ENCODE measurements at regions of chr17 and their contacts with region 1.

Region 1: DNA sequence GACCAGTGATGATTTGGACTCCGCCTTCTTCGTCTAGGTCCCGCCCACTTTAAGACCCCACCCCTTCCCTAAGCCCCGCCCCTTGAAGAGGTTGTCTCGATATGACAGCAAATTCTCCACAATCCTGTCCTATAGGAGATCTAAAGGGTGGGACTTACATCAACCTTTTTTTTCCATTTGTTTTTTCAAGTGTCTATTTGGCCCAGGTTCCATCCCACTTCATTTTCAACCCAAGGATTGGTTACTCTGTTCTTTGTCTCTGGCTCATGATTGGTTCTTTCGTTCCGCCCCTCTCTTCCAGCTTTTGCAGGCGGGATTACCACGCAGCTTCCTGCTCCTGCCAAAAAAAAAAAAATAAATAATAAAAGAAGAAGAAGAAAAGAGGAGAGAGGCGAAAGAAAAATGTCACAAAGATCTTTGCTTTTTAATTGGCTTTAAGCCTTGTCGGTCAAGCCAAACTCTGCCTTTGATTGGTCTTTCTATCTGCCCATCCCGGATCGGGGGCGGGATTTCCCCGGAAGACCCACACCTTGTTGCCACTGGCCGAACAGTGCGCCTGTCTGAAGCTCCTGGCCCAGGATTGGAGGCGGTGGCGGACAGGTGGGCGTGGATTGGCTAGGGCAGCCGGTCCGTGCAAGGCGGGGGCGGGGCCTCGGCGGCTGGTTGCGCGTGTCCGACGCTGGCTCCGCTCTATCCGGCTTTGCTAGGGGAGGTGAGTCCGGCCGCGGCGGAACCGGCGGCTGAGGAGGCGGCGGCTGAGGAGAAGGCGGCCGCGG is 1.2 kb upstream of the NLK start:
- DNase-seq: peak; percentile 98 to 100
- H3K4me3 ChIP-seq: peak overlapping the region; percentile 60 to 93
- H3K27ac ChIP-seq: peak overlapping the region; percentile 78 to 81
- H3K4me1 ChIP-seq: peaks cover 9 to 14% of the 10 kb centered on the region in 2 donors
- H3K27me3 ChIP-seq: no peaks in the 10 kb centered on the region
- CTCF ChIP-seq: no peak

Region 2: GRCh38 chr17:27892866-27893769 is 148.1 kb before region 1 on chr17 and contains the start of gene LYRM9:
- intact Hi-C with region 1: loop called (anchors 5 kb)
- DNase-seq: peak; percentile 62 to 96
- H3K4me3 ChIP-seq: peak within 1 kb of the TSS; percentile 76 to 98
- H3K27ac ChIP-seq: peak within 1 kb of the TSS; percentile 62 to 88
- H3K4me1 ChIP-seq: peaks cover 0 to 9% of the 10 kb centered on the region in 2 donors
- H3K27me3 ChIP-seq: no peaks in the 10 kb centered on the region
- CTCF ChIP-seq: peak; percentile 72 to 92 (median 82)
- total RNA-seq, gene LYRM9: 22.2 TPM

Region 3: DNA sequence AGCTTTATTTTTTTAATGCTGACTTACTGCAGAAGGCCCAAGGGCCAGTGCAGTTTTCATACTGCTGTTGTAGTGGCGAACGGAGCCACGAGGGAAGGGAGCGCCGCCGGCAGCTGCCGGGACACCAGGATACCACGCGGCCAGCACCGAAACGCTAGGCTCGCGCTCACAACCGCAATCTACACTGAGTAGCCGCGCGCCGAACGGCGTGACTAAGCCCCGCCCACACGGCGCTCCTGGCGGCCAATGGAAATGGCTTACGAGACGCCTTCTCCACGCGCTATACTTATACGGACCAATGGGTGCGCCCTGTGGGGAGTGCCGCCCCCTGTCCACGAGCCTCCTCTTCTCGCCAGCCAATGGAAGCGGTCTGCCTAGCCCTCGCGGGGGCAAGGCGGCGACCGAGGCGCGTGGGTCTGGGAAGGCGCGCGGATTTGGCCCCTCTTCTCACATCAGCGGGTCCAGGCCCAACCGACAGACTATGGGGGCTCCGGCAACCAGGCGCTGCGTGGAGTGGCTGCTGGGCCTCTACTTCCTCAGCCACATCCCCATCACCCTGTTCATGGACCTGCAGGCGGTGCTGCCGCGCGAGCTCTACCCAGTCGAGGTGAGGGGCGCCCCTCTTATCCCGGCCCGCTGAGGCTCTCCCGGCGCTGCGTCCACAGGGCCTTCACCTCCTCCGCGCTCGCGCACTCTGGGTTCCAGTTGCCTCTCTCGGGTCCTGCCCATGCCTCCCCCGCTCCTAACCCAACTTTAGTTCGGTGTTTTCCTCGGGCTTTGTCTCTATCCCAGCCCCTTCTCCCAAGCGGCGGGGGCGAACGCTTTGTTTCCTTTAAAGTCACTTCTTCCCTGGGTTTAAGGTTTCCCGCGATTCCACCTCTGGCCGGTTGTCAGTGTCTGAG is 277.8 kb after region 1 on chr17 and contains the start of gene TMEM97:
- intact Hi-C with region 1: loop called (anchors 5 kb)
- DNase-seq: peak; percentile 87 to 97
- H3K4me3 ChIP-seq: peak within 1 kb of the TSS; percentile 67 to 72
- H3K27ac ChIP-seq: peak within 1 kb of the TSS; percentile 12 to 51
- H3K4me1 ChIP-seq: peaks cover 5 to 13% of the 10 kb centered on the region in 2 donors
- H3K27me3 ChIP-seq: no peaks in the 10 kb centered on the region
- CTCF ChIP-seq: no peak
- total RNA-seq, gene TMEM97: not detected

Region 4: DNA sequence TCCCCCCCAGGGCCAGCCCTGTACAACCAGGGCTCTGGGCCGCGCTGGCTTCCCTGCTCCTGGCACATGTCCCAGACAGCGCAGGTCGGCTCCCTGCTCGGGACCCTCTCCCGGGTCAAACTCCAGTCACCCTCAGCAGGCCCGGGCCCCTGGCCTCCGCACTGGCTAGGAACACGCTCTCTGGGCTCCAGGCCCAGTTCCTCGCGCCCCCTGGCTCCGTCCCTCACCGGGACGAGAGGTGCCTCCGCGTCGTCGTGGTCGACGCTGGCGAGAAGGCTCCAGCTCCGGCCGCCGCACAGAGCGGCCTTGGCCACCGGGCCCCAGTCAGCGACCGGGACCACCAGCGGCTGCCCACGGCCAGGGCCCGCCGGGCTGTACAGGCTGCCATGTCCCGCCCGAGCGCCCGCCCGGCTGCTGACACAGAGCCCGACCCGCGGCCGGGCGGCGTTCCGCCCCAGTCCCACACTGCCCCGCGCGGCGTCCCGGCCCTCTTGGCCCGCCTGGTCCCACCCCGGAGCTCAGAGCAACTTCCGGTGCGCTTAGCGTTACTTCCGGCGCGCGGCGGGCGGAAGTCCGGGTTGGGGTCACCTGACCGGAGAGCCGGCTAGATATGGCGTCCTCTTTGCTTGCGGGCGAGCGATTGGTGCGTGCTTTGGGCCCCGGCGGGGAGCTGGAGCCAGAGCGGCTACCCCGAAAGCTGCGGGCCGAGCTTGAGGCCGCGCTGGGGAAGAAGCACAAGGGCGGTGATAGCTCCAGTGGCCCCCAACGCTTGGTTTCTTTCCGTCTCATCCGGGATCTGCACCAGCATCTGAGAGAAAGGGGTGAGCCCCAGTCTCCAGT is 316.0 kb after region 1 on chr17 and contains the start of gene POLDIP2:
- intact Hi-C with region 1: loop called (anchors 5 kb)
- DNase-seq: peak; percentile 75 to 97
- H3K4me3 ChIP-seq: peak within 1 kb of the TSS; percentile 93 to 99
- H3K27ac ChIP-seq: peak within 1 kb of the TSS; percentile 92 to 95
- H3K4me1 ChIP-seq: peaks cover 3 to 17% of the 10 kb centered on the region in 2 donors
- H3K27me3 ChIP-seq: no peaks in the 10 kb centered on the region
- CTCF ChIP-seq: peak in 1 of 3 experiments; percentile 14
- total RNA-seq, gene POLDIP2: 82.2 TPM

Measured in ascending aorta (tissue), 2 donors.